AG04450 (cell line): ENCODE measurements at regions of chr15 and their contacts with region 1.

Region 1: DNA sequence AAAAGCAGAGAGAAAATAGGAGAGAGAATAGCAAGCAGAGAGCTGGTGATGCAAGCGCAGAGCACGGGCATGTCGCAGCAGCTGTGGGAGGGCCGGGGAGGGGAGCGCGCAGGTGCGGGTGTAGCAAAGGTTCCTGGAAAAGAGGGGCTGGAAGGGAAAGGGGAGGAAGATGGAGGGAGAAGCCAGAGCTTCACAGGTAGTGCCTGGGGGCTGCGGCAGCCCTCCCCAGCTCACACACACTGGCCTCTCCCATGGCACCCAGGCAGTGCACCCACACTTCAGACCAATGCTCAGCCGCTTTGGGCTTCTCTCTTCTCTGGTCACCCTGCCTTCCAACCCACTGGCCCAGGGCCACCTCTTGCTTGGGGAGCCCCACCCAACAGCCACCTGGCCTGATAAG is 72.1 kb downstream of the ADAMTS7 start:
- DNase-seq: no peak
- H3K4me3 ChIP-seq: no peak overlapping the region
- H3K27ac ChIP-seq: no peak overlapping the region
- H3K27me3 ChIP-seq: peaks cover 11% of the 10 kb centered on the region
- CTCF ChIP-seq: no peak

Region 2: GRCh38 chr15:78638658-78639314 is 100.4 kb before region 1 on chr15:
- CTCF ChIA-PET with region 1: interaction called, 14 read pairs
- POLR2A ChIA-PET with region 1: no interaction called
- DNase-seq: no peak
- H3K4me3 ChIP-seq: no peak overlapping the region
- H3K27ac ChIP-seq: no peak overlapping the region
- H3K27me3 ChIP-seq: peaks cover 35% of the 10 kb centered on the region
- CTCF ChIP-seq: peak; percentile 68

Region 3: GRCh38 chr15:78709263-78709882 is 29.8 kb before region 1 on chr15:
- CTCF ChIA-PET with region 1: no interaction called
- POLR2A ChIA-PET with region 1: no interaction called
- DNase-seq: no peak
- H3K4me3 ChIP-seq: 0 out of 2 replicates have a peak overlapping the region, but pooled peaks have one; percentile 20
- H3K27ac ChIP-seq: no peak overlapping the region
- H3K27me3 ChIP-seq: peaks cover 21% of the 10 kb centered on the region
- CTCF ChIP-seq: peak; percentile 90